K562 (cell line): ENCODE measurements at regions of chr1 and their contacts with region 1.

Region 1: DNA sequence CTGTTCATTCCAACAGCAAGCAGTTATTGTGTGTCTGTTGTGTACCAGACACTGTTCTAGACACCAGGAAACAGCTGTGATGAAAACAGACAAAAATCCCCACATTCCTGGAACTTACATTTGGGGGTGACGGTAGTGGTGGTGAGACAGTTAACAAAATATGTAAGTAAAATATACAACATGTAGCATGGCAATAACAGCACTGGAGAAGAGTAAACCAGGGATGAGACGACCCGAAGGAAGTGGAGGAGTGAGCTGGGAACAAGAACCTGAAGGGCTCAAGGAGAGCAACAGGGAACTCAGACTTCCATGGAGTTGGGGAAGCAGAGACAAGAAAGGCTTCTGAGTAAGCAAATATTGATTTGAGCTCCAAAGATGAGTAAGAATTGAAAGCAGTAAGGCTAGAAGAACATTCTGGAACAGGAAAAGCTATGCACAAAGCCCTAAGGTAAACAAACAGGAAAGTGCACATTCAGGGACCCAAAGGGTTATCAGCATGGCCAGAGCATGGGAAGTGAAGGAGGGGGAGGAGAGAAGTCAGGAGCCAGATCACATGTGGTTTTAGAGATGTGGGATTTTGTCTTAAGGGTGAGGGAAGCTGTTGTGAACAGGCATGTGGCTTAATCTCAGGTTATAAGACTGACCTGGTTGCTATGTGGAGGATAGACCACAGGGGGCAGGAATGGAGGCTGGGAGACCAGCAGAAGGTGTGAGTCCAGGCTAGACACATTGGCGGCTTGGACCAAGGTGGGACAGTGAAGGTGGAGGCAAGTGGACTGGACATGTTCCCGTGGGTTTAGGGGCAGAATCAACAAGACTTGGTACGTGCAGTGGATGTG is 7.3 kb downstream of the CSF1 start:
- DNase-seq: peak; percentile 86 to 95 (median 90)
- ATAC-seq: peak; percentile 93
- H3K4me3 ChIP-seq: no peak overlapping the region
- H3K27ac ChIP-seq: peak overlapping the region; percentile 70
- H3K4me1 ChIP-seq: peaks cover 28 to 33% of the 10 kb centered on the region in 2 experiments
- H3K27me3 ChIP-seq: no peaks in the 10 kb centered on the region
- CTCF ChIP-seq: peak; percentile 74 to 88 (median 77)
- EP300 ChIP-seq: peak; percentile 97
- POLR2A ChIP-seq: no peak
- RAD21 ChIP-seq: peak; percentile 42 to 70; a peak in 3 of 4 replicates

Region 2: GRCh38 chr1:109790735-109791494 is 127.1 kb before region 1 on chr1:
- CTCF ChIA-PET with region 1: interaction called, 4 read pairs
- POLR2A ChIA-PET with region 1: interaction called, 4 read pairs
- in situ Hi-C with region 1: no loop called
- intact Hi-C with region 1: loop called (anchors 5 kb)
- DNase-seq: peak; percentile 66 to 80 (median 74)
- ATAC-seq: peak; percentile 62
- H3K4me3 ChIP-seq: no peak overlapping the region
- H3K27ac ChIP-seq: peak overlapping the region; percentile 26; the same call in 2 of the 3 replicates
- H3K4me1 ChIP-seq: peaks cover 65 to 66% of the 10 kb centered on the region in 2 experiments
- H3K27me3 ChIP-seq: no peaks in the 10 kb centered on the region
- CTCF ChIP-seq: peak; percentile 70 to 85 (median 75)
- EP300 ChIP-seq: no peak
- POLR2A ChIP-seq: no peak
- RAD21 ChIP-seq: peak; percentile 62 to 67

Region 3: DNA sequence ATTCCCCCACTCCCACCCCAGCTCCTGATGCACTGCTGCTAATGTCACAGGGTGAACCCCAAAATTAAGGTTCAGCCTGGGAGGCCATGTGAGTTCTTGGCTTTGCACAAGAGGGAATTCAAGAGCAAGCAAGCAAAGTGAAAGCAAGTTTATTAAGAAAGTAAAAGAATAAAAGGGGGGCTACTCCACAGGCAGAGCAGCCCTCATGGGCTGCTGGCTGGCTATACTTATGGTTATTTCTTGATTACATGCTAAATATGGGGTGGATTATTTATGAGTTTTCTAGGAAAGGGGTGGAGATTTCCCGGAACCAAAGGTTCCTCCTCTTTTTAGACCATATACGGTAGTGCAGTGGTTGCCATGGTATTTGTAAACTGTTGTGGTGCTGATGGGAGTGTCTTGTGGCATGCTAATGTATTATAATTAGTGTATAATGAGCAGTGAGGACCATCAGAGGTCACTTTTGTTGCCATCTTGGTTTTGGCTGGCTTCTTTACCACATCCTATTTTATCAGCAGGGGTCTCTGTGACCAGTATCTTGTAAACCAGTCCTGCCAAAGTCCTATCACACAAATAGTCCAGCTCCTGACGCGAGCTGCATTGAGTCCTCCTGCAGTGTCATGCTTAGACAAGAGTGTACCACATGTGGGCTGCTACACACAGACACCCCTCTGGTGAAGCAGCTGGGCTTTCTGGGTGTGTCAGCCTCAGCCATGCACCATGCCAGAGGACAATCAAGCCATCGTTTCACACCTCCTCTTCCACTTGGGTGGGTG is 53.8 kb before region 1 on chr1:
- CTCF ChIA-PET with region 1: no interaction called
- POLR2A ChIA-PET with region 1: no interaction called
- in situ Hi-C with region 1: loop called (anchors 5 kb)
- intact Hi-C with region 1: no loop called
- DNase-seq: peak; percentile 42 to 82 (median 52)
- ATAC-seq: peak; percentile 97
- H3K4me3 ChIP-seq: no peak overlapping the region
- H3K27ac ChIP-seq: peak overlapping the region; percentile 42; the same call in 2 of the 3 replicates
- H3K4me1 ChIP-seq: peaks cover 6 to 13% of the 10 kb centered on the region in 2 experiments; a peak in 3 of 5 replicates
- H3K27me3 ChIP-seq: no peaks in the 10 kb centered on the region
- CTCF ChIP-seq: peak in 1 of 3 experiments; percentile 18; a peak in 1 of 6 replicates
- EP300 ChIP-seq: 0 out of 2 replicates have a peak, but pooled peaks have one; percentile 15
- POLR2A ChIP-seq: no peak
- RAD21 ChIP-seq: peak in 1 of 2 experiments; percentile 7; a peak in 1 of 4 replicates

Region 4: DNA sequence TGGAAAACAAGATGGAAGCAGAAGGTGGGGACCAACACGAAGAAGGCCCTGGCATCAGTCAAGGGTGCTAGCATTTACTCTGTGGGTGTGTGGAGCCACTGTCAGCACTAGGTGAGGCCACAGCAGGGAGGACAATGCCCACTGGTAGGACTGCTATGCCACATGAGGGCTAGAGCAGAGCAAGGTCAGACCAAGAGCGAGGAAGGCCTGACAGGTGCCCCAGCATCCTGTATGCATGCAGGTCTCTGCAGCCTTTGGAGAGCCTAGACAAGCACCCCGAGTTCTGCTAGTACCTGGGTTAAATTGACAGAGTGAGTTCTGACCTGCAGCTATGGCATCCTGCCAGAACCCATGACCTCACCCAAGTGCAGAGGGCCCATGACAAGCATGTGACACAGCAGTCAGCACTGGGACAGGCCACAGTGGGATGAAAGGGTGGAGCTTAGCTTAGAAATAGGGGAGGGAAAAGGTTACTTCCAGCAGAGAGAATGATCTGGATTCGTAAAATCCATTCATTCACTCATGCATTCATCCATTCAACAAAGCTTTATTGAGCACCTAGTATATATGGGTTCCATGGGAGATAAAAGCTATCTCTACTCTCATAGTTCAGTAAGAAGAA is 16.4 kb before region 1 on chr1:
- CTCF ChIA-PET with region 1: no interaction called
- POLR2A ChIA-PET with region 1: interaction called, 15 read pairs
- in situ Hi-C with region 1: no loop called
- intact Hi-C with region 1: no loop called
- DNase-seq: peak; percentile 91 to 95 (median 93)
- ATAC-seq: peak; percentile 95
- H3K4me3 ChIP-seq: no peak overlapping the region
- H3K27ac ChIP-seq: peak overlapping the region; percentile 49; the same call in 2 of the 3 replicates
- H3K4me1 ChIP-seq: peaks cover 24 to 48% of the 10 kb centered on the region in 2 experiments
- H3K27me3 ChIP-seq: no peaks in the 10 kb centered on the region
- CTCF ChIP-seq: no peak
- EP300 ChIP-seq: peak; percentile 82
- POLR2A ChIP-seq: no peak
- RAD21 ChIP-seq: peak in 1 of 2 experiments; percentile 9; a peak in 1 of 4 replicates